Transverse colon (tissue), 4 donors: ENCODE measurements at regions of chr2 and their contacts with region 1.

Region 1: GRCh38 chr2:79041032-79041448 is 15.5 kb downstream of the REG3G start:
- DNase-seq: no peak
- H3K4me3 ChIP-seq: no peak overlapping the region
- H3K27ac ChIP-seq: no peak overlapping the region
- H3K4me1 ChIP-seq: no peaks in the 10 kb centered on the region
- H3K27me3 ChIP-seq: no peaks in the 10 kb centered on the region
- CTCF ChIP-seq: peak; percentile 24 to 50 (median 41)
- EP300 ChIP-seq: no peak
- POLR2A ChIP-seq: no peak

Region 2: GRCh38 chr2:79189465-79189864 is 148.4 kb after region 1 on chr2:
- in situ Hi-C with region 1: no loop called
- intact Hi-C with region 1: no loop called
- DNase-seq: no peak
- H3K4me3 ChIP-seq: no peak overlapping the region
- H3K27ac ChIP-seq: no peak overlapping the region
- H3K4me1 ChIP-seq: no peaks in the 10 kb centered on the region
- H3K27me3 ChIP-seq: no peaks in the 10 kb centered on the region
- CTCF ChIP-seq: no peak
- EP300 ChIP-seq: no peak
- POLR2A ChIP-seq: no peak

Region 3: GRCh38 chr2:79223539-79223938 is 182.5 kb after region 1 on chr2:
- in situ Hi-C with region 1: loop called in 2 of 4 experiments (anchors 10 kb)
- intact Hi-C with region 1: no loop called
- DNase-seq: no peak
- H3K4me3 ChIP-seq: no peak overlapping the region
- H3K27ac ChIP-seq: no peak overlapping the region
- H3K4me1 ChIP-seq: no peaks in the 10 kb centered on the region
- H3K27me3 ChIP-seq: no peaks in the 10 kb centered on the region
- CTCF ChIP-seq: no peak
- EP300 ChIP-seq: no peak
- POLR2A ChIP-seq: no peak

Region 4: DNA sequence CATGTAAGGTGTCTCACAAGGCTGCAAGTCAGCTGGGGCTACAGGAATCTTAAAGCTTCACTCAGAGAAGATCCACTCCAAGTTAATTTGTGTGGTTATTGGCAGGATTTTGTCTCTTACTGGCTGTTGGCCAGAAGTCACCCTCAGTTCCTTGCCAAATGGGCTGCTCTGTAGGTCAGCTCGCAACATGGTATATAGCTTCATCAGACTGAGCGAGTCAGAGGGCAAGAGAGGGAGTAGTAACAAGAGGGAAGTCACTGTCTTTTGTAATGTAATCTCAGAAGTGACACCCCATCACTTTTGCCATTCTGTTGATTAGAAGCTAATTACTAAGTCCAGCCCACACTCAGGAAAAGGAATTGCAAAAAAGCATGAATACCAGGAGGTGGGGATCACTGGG is 1144.1 kb after region 1 on chr2:
- in situ Hi-C with region 1: no loop called
- intact Hi-C with region 1: no loop called
- DNase-seq: no peak
- H3K4me3 ChIP-seq: no peak overlapping the region
- H3K27ac ChIP-seq: no peak overlapping the region
- H3K4me1 ChIP-seq: no peaks in the 10 kb centered on the region
- H3K27me3 ChIP-seq: no peaks in the 10 kb centered on the region
- CTCF ChIP-seq: no peak
- EP300 ChIP-seq: no peak
- POLR2A ChIP-seq: no peak